ENCODE measurements at regions of chr6 and their contacts with region 1.

Region 1: GRCh38 chr6:90098001-90098531 is 198.6 kb downstream of the BACH2 start:
- DNase-seq: peak; percentile 81 to 82
- ATAC-seq: peak; percentile 87 to 91 (median 88)
- H3K4me3 ChIP-seq: no peak overlapping the region
- H3K27ac ChIP-seq: peak overlapping the region; percentile 86
- H3K4me1 ChIP-seq: peaks cover 39% of the 10 kb centered on the region
- H3K27me3 ChIP-seq: no peaks in the 10 kb centered on the region
- CTCF ChIP-seq: peak; percentile 37

Region 2: DNA sequence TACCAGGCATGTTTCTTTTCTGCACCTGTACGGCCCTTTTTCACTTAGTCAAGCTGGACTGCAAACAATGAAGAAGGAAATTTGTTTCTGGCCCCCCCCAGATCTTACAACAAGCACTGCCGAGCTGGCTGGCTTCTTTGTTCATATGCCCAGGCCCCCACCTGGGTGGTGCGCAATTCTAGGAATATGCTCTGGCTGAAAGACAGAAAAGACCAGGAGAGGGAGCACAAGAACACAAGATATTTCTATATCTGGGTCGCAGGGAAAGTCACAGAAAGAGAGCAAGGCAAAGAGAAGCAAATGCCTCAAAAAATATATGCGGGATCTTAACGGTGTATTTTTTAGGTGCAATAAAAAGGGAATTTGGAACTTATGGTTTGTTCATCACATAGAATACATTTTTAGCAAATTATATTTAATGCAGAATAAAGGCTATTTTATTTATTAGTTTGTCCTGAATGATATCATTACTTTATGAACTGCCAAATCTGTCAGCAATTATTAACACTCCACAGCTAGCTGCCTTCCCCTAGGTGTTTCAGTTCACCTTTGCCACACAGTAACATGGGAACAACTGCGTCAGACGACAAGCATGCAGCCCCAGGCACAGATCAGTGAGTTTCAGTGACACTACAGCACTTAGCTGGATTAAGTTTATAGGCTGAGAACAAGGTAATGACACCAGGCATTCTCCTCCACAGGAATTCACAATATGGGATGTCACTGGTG is 127.3 kb before region 1 on chr6:
- intact Hi-C with region 1: loop called (anchors 10 kb)
- DNase-seq: peak; percentile 23 to 54
- ATAC-seq: peak; percentile 43 to 84 (median 65)
- H3K4me3 ChIP-seq: no peak overlapping the region
- H3K27ac ChIP-seq: no peak overlapping the region
- H3K4me1 ChIP-seq: peaks cover 32% of the 10 kb centered on the region
- H3K27me3 ChIP-seq: no peaks in the 10 kb centered on the region
- CTCF ChIP-seq: peak; percentile 57

Region 3: DNA sequence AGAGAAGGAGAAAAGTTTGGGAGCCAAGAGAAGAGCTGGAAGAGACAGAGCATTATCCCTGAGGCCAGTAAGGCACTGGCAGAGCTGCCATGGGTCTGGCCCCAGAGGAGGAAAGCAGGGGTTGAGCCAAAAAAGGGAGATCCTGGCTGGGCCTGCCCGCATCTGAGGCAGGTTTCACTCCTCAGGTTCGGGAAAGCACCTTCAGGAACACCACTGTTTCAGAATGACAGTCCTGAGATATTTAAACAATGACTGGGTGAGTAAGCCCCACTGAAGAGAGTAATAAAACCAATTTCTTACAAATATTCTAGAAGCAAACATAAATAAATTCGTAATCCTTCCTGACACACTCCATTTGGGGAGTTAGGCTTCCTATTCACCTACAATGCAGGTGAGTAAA is 46.3 kb after region 1 on chr6:
- intact Hi-C with region 1: no loop called
- DNase-seq: no peak
- ATAC-seq: no peak
- H3K4me3 ChIP-seq: no peak overlapping the region
- H3K27ac ChIP-seq: no peak overlapping the region
- H3K4me1 ChIP-seq: peaks cover 5% of the 10 kb centered on the region
- H3K27me3 ChIP-seq: no peaks in the 10 kb centered on the region
- CTCF ChIP-seq: no peak

Measured in psoas muscle (tissue), 8 donors.